Heart left ventricle (tissue), 16 donors: ENCODE measurements at regions of chrX and their contacts with region 1.

Region 1: DNA sequence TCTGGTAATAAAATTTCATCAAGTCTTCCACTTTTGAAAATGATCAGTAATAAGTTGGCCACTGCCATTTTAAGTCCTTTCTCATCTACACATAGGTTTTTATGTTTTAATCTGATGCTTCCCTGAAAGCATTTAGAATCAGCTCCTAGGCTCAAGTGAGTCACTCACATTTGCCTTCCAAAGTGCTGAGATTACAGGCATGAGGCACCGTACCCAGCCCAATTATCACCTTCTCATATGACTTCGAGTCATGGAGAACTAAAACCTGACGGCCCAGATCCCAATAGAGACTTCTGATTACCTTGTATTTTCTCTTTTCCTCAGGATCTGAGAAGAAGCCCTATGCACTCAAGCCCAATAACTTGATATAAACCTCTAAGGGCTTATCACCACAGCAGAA is 140.8 kb downstream of the OPHN1 start:
- DNase-seq: no peak
- ATAC-seq: no peak
- H3K4me3 ChIP-seq: no peak overlapping the region
- H3K27ac ChIP-seq: no peak overlapping the region
- H3K4me1 ChIP-seq: no peaks in the 10 kb centered on the region
- H3K27me3 ChIP-seq: peaks cover 0 to 5% (median 0%) of the 10 kb centered on the region in 9 donors
- CTCF ChIP-seq: no peak
- POLR2A ChIP-seq: no peak

Region 2: DNA sequence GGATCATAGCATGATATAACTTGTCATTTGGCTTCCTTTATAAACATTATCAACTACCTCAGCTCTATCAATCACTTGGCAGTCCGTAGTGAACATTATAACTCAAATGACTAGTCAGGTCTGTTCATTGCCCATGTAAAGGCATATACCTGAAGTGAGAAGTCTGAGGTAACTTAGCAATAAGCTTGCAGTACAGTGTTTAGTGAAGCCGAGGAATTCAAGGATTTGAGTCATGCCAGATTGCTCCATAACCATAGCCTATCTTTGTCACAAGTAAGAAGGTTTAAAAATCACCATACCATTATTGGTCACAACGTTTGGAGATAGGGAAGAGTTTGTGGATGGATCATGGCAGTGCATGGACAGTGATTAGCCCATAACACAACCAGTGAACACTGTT is 707.1 kb before region 1 on chrX:
- intact Hi-C with region 1: no loop called
- DNase-seq: no peak
- ATAC-seq: no peak
- H3K4me3 ChIP-seq: no peak overlapping the region
- H3K27ac ChIP-seq: no peak overlapping the region
- H3K4me1 ChIP-seq: peaks cover 0 to 4% (median 0%) of the 10 kb centered on the region in 12 donors
- H3K27me3 ChIP-seq: peaks cover 0 to 5% (median 0%) of the 10 kb centered on the region in 9 donors
- CTCF ChIP-seq: no peak
- POLR2A ChIP-seq: no peak

Region 3: GRCh38 chrX:68273887-68274286 is 18.6 kb before region 1 on chrX:
- intact Hi-C with region 1: loop called in 1 of 10 experiments (anchors 2 kb)
- DNase-seq: no peak
- ATAC-seq: no peak
- H3K4me3 ChIP-seq: no peak overlapping the region
- H3K27ac ChIP-seq: no peak overlapping the region
- H3K4me1 ChIP-seq: no peaks in the 10 kb centered on the region
- H3K27me3 ChIP-seq: peaks cover 0 to 3% (median 0%) of the 10 kb centered on the region in 9 donors
- CTCF ChIP-seq: no peak
- POLR2A ChIP-seq: no peak